Activated CD4-positive, alpha-beta T cell treated with anti-CD3 and anti-CD28 coated beads for 36 hours (primary cell): ENCODE measurements at regions of chr2 and their contacts with region 1.

Region 1: GRCh38 chr2:229921892-229922445 is at the start of gene TRIP12:
- DNase-seq: peak; percentile 93
- ATAC-seq: peak; percentile 82
- H3K4me3 Mint-ChIP-seq: peak within 1 kb of the TSS; percentile 100
- H3K27ac Mint-ChIP-seq: peak within 1 kb of the TSS; percentile 99
- H3K4me1 Mint-ChIP-seq: peaks cover 35% of the 10 kb centered on the region
- H3K27me3 Mint-ChIP-seq: no peaks in the 10 kb centered on the region
- total RNA-seq, gene TRIP12: 231 to 382 TPM

Region 2: DNA sequence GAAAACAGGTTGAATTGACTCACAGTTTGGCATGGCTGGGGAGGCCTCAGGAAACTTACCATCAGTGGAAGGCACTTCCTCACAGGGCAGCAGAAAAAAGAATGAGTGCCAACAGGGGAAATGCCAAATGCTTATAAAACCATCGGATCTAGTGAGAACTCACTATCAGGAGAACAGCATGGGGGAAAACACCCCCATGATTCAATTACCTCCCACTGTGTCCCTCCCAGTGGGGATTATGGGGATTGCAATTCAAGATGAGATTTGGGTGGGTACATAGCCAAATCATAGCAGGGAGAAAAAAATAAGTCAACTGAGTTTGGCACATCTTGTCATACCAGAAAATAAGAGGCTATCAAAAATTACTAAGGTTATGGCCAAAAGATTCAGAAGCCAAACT is 96.5 kb before region 1 on chr2:
- CTCF ChIA-PET with region 1: no interaction called
- POLR2A ChIA-PET with region 1: interaction called, 5 read pairs
- intact Hi-C with region 1: loop called (anchors 1 kb)
- DNase-seq: no peak
- ATAC-seq: no peak
- H3K4me3 Mint-ChIP-seq: no peak overlapping the region
- H3K27ac Mint-ChIP-seq: no peak overlapping the region
- H3K4me1 Mint-ChIP-seq: peaks cover 21% of the 10 kb centered on the region
- H3K27me3 Mint-ChIP-seq: no peaks in the 10 kb centered on the region

Region 3: GRCh38 chr2:229955663-229956062 is 33.7 kb after region 1 on chr2:
- CTCF ChIA-PET with region 1: no interaction called
- POLR2A ChIA-PET with region 1: no interaction called
- intact Hi-C with region 1: no loop called
- DNase-seq: no peak
- ATAC-seq: no peak
- H3K4me3 Mint-ChIP-seq: no peak overlapping the region
- H3K27ac Mint-ChIP-seq: no peak overlapping the region
- H3K4me1 Mint-ChIP-seq: no peaks in the 10 kb centered on the region
- H3K27me3 Mint-ChIP-seq: no peaks in the 10 kb centered on the region

Region 4: DNA sequence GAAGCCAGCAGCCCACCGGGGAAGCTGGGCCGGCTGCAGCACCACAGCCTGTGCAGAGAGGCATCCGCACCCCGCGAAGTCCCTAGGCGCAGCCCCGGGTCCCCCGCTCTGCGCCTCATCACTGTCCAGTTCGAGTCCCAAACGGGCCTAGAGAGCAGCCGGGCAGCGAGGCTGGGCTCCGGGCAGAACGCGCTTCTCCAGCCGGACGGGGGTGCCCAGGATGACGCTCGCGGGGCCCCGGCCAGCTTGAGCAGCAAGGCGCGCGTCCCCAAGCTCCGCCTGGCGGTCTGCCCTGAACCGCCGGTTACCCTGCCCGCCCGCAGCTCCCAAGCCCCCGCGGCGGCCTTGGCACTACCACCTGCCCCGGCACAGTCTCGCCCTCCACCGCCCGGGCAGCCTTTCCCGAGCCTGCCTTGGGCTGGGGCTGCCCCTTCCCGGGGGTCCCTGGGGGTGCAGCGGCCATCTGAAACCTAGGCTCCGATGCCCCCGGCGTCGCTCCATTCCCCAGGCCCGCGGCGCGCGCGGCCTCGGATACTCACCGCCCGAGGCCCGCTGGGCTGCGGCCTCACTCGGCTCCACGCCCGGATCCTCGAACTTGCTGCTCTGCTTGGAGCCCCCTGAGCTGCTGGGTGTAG is 146.2 kb after region 1 on chr2:
- CTCF ChIA-PET with region 1: interaction called, 3 read pairs
- POLR2A ChIA-PET with region 1: no interaction called
- intact Hi-C with region 1: loop called in 1 of 2 experiments (anchors 5 kb)
- DNase-seq: peak; percentile 77
- ATAC-seq: peak; percentile 57
- H3K4me3 Mint-ChIP-seq: peak overlapping the region; percentile 72
- H3K27ac Mint-ChIP-seq: peak overlapping the region; percentile 79
- H3K4me1 Mint-ChIP-seq: peaks cover 17% of the 10 kb centered on the region
- H3K27me3 Mint-ChIP-seq: peaks cover 12% of the 10 kb centered on the region

Region 5: DNA sequence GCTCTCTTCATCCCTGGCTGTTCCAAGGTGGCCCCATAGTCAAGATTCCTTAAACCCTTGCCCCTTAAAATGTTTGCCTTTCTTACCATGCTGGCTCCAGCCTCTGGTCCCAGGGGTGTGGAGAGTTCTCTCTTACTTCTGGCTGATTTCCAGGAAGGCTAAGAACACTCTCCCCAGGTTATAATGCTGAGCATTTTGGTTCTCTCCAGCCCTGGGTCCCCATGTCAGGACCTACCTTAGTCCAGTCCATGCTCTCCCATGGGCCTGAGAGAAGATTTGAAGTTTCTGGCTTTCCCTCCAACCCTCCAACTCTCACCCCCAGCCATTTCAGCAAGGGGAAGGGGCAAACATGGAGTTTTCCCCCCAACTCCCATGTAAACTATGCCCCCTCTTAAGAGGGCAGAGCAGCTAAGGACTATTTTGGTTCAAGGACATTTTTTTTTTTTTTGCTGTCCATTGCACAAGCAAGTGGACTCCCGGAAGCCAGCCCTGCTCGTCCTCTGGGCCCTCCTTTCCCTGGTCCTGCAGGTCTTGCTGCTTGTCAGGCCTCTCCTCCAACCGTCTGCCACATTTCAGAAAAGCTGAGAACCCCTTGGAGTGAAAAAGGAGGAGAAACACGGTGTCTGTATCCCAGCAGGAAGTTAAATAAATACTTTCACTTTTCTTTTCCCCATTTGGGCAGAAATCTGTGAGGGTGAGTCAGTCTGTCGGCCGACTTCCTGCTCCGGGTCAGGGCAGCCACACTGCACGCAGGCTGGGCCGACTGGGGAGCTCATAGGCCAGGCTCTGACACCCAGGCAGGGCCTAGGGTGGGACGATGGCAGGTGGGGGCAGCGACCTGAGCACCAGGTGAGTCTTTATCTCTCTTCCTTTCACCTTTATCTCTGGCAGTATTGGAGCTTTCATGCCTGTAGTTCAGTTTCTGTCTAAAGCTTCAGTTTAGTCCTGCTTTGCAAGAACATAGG is 404.8 kb after region 1 on chr2 and contains the start of gene SP140L:
- CTCF ChIA-PET with region 1: no interaction called
- POLR2A ChIA-PET with region 1: interaction called, 3 read pairs
- intact Hi-C with region 1: loop called in 1 of 2 experiments (anchors 2 kb)
- DNase-seq: peak; percentile 89
- ATAC-seq: peak; percentile 97
- H3K4me3 Mint-ChIP-seq: peak within 1 kb of the TSS; percentile 89
- H3K27ac Mint-ChIP-seq: peak within 1 kb of the TSS; percentile 98
- H3K4me1 Mint-ChIP-seq: peaks cover 61% of the 10 kb centered on the region
- H3K27me3 Mint-ChIP-seq: no peaks in the 10 kb centered on the region
- total RNA-seq, gene SP140L: 40.1 to 43.4 TPM

Region 6: GRCh38 chr2:231463698-231464575 is 1542.0 kb after region 1 on chr2 and contains the start of gene NCL:
- CTCF ChIA-PET with region 1: no interaction called
- POLR2A ChIA-PET with region 1: no interaction called
- intact Hi-C with region 1: loop called in 1 of 2 experiments (anchors 2 kb)
- DNase-seq: peak; percentile 92
- ATAC-seq: peak; percentile 93
- H3K4me3 Mint-ChIP-seq: peak within 1 kb of the TSS; percentile 98
- H3K27ac Mint-ChIP-seq: peak within 1 kb of the TSS; percentile 99
- H3K4me1 Mint-ChIP-seq: peaks cover 42% of the 10 kb centered on the region
- H3K27me3 Mint-ChIP-seq: no peaks in the 10 kb centered on the region
- total RNA-seq, gene NCL: 1,311 to 1,332 TPM